ENCODE measurements at regions of chr1 and their contacts with region 1.

Region 1: GRCh38 chr1:240987928-240988327 is 369.1 kb downstream of the RGS7 start:
- DNase-seq: peak; percentile 49
- H3K4me3 Mint-ChIP-seq: no peak overlapping the region
- H3K27ac Mint-ChIP-seq: no peak overlapping the region
- H3K4me1 Mint-ChIP-seq: no peaks in the 10 kb centered on the region
- H3K27me3 Mint-ChIP-seq: no peaks in the 10 kb centered on the region
- CTCF ChIP-seq: no peak

Region 2: GRCh38 chr1:240878631-240879030 is 109.3 kb before region 1 on chr1:
- CTCF ChIA-PET with region 1: no interaction called
- POLR2A ChIA-PET with region 1: no interaction called
- intact Hi-C with region 1: no loop called
- DNase-seq: peak; percentile 17
- H3K4me3 Mint-ChIP-seq: no peak overlapping the region
- H3K27ac Mint-ChIP-seq: no peak overlapping the region
- H3K4me1 Mint-ChIP-seq: peaks cover 7% of the 10 kb centered on the region
- H3K27me3 Mint-ChIP-seq: no peaks in the 10 kb centered on the region
- CTCF ChIP-seq: no peak

Region 3: DNA sequence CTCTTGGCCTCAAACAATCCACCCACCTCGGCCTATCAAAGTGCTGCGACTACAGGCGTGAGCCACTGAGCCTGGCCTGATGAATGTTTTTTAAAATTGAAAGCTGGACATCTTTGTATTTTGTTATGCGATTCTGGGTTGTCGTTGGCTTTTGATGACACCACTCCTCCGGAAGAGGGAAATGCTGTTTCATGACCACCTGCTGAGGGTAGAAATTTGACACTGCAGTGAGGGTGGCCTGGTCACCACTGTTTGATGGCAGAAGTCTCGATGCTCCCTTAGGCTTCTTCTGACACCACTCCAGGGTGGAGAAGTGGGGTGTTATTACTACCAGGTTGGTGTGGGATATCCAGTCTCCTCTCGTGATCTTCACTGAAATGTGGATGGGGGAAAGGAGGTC is 11.9 kb after region 1 on chr1:
- CTCF ChIA-PET with region 1: interaction called, 14 read pairs
- POLR2A ChIA-PET with region 1: interaction called, 3 read pairs
- intact Hi-C with region 1: no loop called
- DNase-seq: no peak
- H3K4me3 Mint-ChIP-seq: no peak overlapping the region
- H3K27ac Mint-ChIP-seq: no peak overlapping the region
- H3K4me1 Mint-ChIP-seq: no peaks in the 10 kb centered on the region
- H3K27me3 Mint-ChIP-seq: peaks cover 14% of the 10 kb centered on the region
- CTCF ChIP-seq: no peak

Measured in MCF 10A (cell line).